Panc1 (cell line): ENCODE measurements at regions of chr6 and their contacts with region 1.

Region 1: GRCh38 chr6:32166411-32167061 is 2.1 kb downstream of the EGFL8 start:
- DNase-seq: no peak
- ATAC-seq: no peak; the same call in 1 of the 2 replicates
- H3K4me3 ChIP-seq: no peak overlapping the region
- H3K27ac ChIP-seq: no peak overlapping the region
- H3K4me1 ChIP-seq: no peaks in the 10 kb centered on the region
- H3K27me3 ChIP-seq: no peaks in the 10 kb centered on the region
- CTCF ChIP-seq: no peak

Region 2: DNA sequence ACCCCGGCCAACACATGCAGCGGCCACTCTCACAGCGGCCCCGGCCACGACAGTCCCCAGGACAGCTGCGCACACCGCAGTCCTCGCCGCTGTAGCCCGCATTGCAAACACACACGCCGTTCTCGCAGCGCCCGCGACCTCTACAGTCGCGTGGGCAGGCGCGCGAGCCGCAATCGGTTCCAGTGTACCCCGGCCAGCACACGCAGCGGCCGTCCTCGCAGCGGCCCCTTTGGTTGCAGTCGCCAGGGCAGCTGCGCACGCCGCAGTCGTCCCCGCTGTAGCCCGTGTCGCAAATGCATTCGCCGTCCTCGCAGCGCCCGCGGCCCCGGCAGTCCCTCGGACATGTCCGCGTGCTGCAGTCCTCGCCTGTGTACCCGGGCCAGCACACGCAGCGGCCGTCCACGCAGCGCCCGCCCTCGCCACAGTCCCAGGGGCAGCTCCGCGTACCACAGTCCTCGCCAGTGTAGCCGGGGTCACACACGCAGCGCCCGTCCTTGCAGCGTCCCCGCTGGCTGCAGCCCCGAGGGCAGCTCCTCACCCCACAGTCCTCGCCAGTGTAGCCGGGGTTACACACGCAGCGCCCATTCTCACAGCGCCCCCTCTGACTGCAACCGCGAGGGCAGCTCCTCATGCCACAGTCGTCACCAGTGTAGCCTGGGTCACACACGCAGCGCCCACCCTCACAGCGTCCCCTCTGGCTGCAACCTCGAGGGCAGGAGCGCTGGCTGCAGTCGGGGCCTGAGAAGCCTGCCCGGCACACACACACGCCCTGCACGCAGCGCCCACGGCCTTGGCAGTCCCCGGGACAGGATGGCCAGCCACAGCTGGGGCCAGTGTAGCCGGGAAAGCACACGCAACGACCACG is 69.9 kb before region 1 on chr6:
- CTCF ChIA-PET with region 1: interaction called, 11 read pairs
- POLR2A ChIA-PET with region 1: no interaction called
- in situ Hi-C with region 1: no loop called
- intact Hi-C with region 1: no loop called
- DNase-seq: no peak
- ATAC-seq: peak; percentile 43
- H3K4me3 ChIP-seq: 0 out of 4 replicates have a peak overlapping the region, but pooled peaks of 1 of the 2 experiments have one; percentile 8
- H3K27ac ChIP-seq: no peak overlapping the region
- H3K4me1 ChIP-seq: no peaks in the 10 kb centered on the region
- H3K27me3 ChIP-seq: no peaks in the 10 kb centered on the region; the same call in 1 of the 2 replicates
- CTCF ChIP-seq: no peak